ENCODE measurements at regions of chr11 and their contacts with region 1.

Region 1: DNA sequence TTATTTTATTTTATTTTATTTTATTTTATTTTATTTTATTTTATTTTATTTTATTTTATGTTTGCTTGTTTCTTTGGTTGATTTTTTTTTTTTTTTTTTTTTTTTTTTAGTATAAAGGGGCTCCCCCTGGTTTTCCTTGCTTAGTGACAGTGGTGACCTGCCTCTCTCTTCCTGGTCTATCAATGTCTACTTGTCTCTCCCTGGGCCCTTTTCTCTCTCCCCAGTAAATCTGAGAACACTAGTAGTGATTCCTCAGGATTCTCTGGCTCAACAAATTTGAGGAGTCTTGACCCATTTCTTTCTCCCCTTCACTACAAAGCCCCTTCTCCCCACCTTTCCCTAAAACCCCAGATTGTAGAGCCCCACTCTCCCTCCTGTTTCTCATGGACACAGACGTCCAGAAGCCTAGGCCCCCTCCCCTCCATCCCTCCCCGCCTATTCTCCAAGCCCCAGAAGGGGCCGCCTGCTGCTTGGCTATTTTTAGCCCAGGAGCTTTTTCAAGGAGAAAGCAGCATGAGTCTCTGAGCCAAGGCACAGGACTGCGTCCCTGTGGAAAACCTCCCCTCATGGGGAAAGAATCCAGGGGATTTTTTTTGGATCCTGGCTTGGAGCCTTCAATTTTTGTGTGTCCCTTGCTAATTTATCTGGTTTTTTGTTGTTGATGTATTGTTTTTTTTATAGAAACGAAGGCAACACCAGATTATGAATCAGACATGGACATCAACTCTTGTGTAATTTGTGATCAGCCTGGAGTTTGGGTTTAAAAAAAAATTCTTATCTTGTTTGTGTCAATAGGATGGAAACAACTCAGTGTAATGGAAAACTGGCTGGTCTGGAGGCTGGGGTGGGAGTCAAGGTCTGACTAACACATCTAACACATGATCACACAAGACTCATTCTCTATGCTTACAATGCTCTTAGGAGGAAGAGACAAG is 17.5 kb upstream of the ACCSL start:
- DNase-seq: peak; percentile 85
- H3K4me3 ChIP-seq: no peak overlapping the region
- H3K27ac ChIP-seq: peak overlapping the region; percentile 70
- H3K4me1 ChIP-seq: peaks cover 35% of the 10 kb centered on the region
- H3K27me3 ChIP-seq: no peaks in the 10 kb centered on the region

Region 2: GRCh38 chr11:43905813-43906241 is 124.4 kb before region 1 on chr11:
- in situ Hi-C with region 1: loop called (anchors 10 kb)
- DNase-seq: peak; percentile 34
- H3K4me3 ChIP-seq: no peak overlapping the region
- H3K27ac ChIP-seq: no peak overlapping the region
- H3K4me1 ChIP-seq: 0 out of 2 replicates have a peak, but pooled peaks cover 4% of the 10 kb centered on the region
- H3K27me3 ChIP-seq: no peaks in the 10 kb centered on the region

Region 3: GRCh38 chr11:43944761-43945311 is 85.4 kb before region 1 on chr11:
- in situ Hi-C with region 1: loop called (anchors 5 kb)
- DNase-seq: peak; percentile 42
- H3K4me3 ChIP-seq: no peak overlapping the region
- H3K27ac ChIP-seq: no peak overlapping the region
- H3K4me1 ChIP-seq: no peaks in the 10 kb centered on the region; the same call in 1 of the 2 replicates
- H3K27me3 ChIP-seq: peaks cover 14% of the 10 kb centered on the region

Measured in GM23248 (cell line).